Pancreas (tissue), 10 donors: ENCODE measurements at regions of chr6 and their contacts with region 1.

Region 1: GRCh38 chr6:2911171-2911570 is 8.1 kb upstream of the SERPINB9 start:
- DNase-seq: no peak
- ATAC-seq: no peak
- H3K4me3 ChIP-seq: no peak overlapping the region
- H3K27ac ChIP-seq: no peak overlapping the region
- H3K4me1 ChIP-seq: no peaks in the 10 kb centered on the region
- H3K27me3 ChIP-seq: no peaks in the 10 kb centered on the region
- CTCF ChIP-seq: no peak

Region 2: GRCh38 chr6:2841264-2842138 is 69.7 kb before region 1 on chr6 and contains the start of gene SERPINB1:
- intact Hi-C with region 1: loop called in 1 of 3 experiments (anchors 10 kb)
- DNase-seq: peak; percentile 91 to 96 (median 94)
- ATAC-seq: peak; percentile 76 to 86 (median 84)
- H3K4me3 ChIP-seq: peak within 1 kb of the TSS; percentile 33 to 61 (median 42)
- H3K27ac ChIP-seq: peak within 1 kb of the TSS; percentile 96 to 98 (median 96)
- H3K4me1 ChIP-seq: peaks cover 0 to 33% (median 31%) of the 10 kb centered on the region in 3 donors
- H3K27me3 ChIP-seq: no peaks in the 10 kb centered on the region
- CTCF ChIP-seq: no peak
- total RNA-seq, gene SERPINB1: 94.1 to 285 (median 190) TPM